Heart left ventricle (tissue), 16 donors: ENCODE measurements at regions of chr9 and their contacts with region 1.

Region 1: DNA sequence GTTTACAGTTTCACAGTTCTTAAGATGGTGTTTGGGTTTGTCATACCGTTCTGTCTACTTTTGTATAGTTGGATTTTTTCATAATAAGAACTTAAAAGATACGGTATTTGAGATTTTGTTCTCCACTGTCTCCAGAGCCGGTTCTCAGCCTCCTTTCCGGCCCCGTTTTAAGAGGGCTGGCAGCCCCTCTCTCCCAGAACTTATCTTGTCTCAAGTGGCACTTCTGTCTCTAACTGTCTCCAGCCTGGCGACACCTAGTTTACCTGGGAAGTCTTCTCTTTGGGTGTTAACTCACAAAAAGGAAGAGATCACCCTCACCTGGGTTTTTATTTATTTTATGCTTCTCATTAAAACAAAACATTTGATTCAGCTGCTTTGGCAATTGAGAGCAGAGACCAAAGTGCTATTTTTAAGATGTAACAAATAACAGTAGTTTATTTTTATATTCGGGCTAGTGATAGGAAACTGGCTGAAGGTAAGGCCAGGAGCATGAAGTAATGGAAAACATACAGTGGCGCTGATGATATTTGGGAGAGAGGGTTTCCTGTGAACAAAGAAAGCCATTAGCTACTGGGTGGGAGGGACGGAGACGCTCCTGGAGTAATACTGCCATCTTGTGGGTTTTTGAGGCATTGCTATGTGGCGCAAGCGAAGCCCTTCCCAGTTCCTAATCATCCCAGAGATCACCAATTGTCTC is 48.3 kb downstream of the ACER2 start:
- DNase-seq: peak in 4 of 5 donors; percentile 52 to 74 (median 62)
- ATAC-seq: peak; percentile 95 to 97 (median 96)
- H3K4me3 ChIP-seq: peak overlapping the region in 9 of 12 donors; percentile 8 to 42 (median 38)
- H3K27ac ChIP-seq: peak overlapping the region; percentile 24 to 82 (median 68)
- H3K4me1 ChIP-seq: peaks cover 0 to 18% (median 10%) of the 10 kb centered on the region in 12 donors
- H3K27me3 ChIP-seq: no peaks in the 10 kb centered on the region
- CTCF ChIP-seq: peak in 11 of 12 donors; percentile 93 to 99 (median 97)
- POLR2A ChIP-seq: no peak

Region 2: GRCh38 chr9:17531642-17532254 is 1925.4 kb before region 1 on chr9:
- intact Hi-C with region 1: loop called in 1 of 10 experiments (anchors 5 kb)
- DNase-seq: no peak
- ATAC-seq: no peak
- H3K4me3 ChIP-seq: no peak overlapping the region
- H3K27ac ChIP-seq: no peak overlapping the region
- H3K4me1 ChIP-seq: peaks cover 0 to 3% (median 0%) of the 10 kb centered on the region in 12 donors
- H3K27me3 ChIP-seq: no peaks in the 10 kb centered on the region
- CTCF ChIP-seq: peak; percentile 37 to 73 (median 58)
- POLR2A ChIP-seq: no peak

Region 3: DNA sequence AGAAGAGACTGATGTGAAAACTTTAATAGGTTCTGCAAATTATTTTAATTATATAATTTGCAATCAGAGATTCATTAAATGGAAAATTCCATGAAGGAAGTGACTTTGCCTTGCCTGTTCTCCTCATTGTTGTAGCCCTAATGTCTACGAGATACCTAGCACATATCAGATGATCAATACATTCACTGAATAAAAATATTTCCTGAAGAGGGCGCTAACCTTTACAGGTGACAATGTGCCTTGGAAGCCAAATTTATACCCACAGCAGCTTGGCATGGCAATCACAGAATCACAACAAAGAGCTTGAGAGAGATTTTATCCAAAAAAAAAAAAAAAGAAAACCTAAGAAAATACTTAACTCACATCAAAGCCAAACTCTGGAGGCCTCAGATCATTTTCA is 371.8 kb before region 1 on chr9:
- intact Hi-C with region 1: loop called in 2 of 10 experiments (anchors 10 kb)
- DNase-seq: no peak
- ATAC-seq: no peak
- H3K4me3 ChIP-seq: no peak overlapping the region
- H3K27ac ChIP-seq: no peak overlapping the region
- H3K4me1 ChIP-seq: no peaks in the 10 kb centered on the region
- H3K27me3 ChIP-seq: no peaks in the 10 kb centered on the region
- CTCF ChIP-seq: peak in 9 of 12 donors; percentile 7 to 40 (median 29)
- POLR2A ChIP-seq: no peak

Region 4: DNA sequence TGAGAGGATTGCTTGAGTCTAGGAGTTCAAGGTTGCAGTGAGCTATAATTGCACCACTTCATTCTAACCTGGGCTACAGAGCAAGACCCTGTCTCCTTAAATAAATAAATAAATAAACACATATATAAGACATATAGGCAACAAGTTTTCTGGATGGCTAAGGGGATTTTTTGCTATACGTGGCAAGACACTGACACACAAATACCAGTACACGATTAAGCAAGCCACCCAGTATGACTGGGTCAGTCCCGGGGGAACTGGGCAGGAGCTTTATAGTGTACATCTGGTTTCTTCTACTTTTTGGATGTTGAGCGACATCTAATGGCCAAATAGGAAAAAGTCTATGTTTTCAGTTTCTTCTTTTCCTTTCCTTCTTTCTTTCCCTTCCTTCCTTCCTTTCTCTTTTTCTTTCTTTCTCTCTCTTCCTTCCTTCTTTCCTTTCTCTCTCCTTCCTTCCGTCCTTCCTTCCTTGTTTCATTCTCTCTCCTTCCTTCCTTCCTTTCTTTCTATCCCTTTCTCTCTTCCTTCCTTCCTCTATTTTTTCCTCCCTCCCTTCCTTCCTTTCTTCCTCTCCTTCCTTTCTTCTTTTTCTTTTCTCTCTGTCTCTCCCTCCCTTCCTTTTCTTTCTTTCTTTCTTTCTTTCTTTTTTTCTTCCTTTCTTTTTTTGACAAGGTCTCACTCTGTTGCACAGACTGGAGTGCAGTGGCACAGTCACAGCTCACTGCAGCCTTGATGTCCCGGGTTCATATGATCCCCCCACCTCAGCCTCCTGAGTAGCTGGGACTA is 282.8 kb before region 1 on chr9:
- intact Hi-C with region 1: loop called in 3 of 10 experiments (anchors 5 to 10 kb)
- DNase-seq: peak; percentile 34 to 84 (median 79)
- ATAC-seq: peak; percentile 82 to 96 (median 88)
- H3K4me3 ChIP-seq: no peak overlapping the region
- H3K27ac ChIP-seq: peak overlapping the region in 1 of 12 donors; percentile 13
- H3K4me1 ChIP-seq: peaks cover 0 to 28% (median 0%) of the 10 kb centered on the region in 12 donors
- H3K27me3 ChIP-seq: no peaks in the 10 kb centered on the region
- CTCF ChIP-seq: peak; percentile 35 to 77 (median 67)
- POLR2A ChIP-seq: no peak

Region 5: DNA sequence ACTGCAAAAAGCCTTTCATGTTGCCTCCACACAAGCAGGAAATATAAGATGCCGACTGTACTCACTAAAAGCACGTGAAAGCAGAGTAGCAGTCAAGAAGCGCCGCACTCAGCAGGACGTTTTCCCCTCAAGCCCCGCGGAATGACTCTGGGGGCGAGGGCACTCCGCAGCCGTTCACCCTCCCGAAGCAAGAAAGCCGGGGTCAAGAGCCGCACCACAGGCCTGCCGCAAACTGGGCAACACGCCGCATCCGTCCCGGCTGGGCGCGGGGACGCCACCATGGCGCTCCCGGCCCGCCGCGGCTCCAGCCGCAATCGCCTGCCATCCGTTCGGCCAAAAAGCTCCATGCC is 77.5 kb before region 1 on chr9:
- intact Hi-C with region 1: loop called in 9 of 10 experiments (anchors 1 to 10 kb)
- DNase-seq: no peak
- ATAC-seq: peak; percentile 29 to 64 (median 62)
- H3K4me3 ChIP-seq: peak overlapping the region; percentile 44 to 86 (median 75)
- H3K27ac ChIP-seq: peak overlapping the region; percentile 64 to 97 (median 91)
- H3K4me1 ChIP-seq: peaks cover 0 to 38% (median 18%) of the 10 kb centered on the region in 12 donors
- H3K27me3 ChIP-seq: no peaks in the 10 kb centered on the region
- CTCF ChIP-seq: peak in 1 of 12 donors; percentile 6
- POLR2A ChIP-seq: no peak

Region 6: DNA sequence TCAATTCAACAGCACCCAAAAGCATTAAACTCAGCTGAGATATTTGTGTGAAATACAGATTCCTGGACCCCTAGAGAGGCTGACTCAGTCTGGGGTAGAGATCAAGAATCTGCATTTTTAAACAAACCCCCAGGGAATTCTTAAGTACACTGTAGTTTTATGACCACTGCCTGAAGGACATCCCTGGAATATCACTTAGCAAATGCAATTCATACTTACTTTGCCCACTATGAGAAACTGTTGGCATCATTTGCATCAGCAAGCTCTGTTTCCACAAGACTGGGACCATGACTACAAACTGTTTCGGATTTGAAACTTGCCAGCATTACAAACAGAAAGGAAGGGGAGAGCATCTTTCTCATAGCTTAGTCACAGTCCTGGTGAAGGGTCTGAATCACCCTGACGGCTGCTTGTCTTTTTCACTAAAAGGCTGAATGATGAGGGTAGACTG is 1101.4 kb after region 1 on chr9:
- intact Hi-C with region 1: no loop called
- DNase-seq: no peak
- ATAC-seq: peak in 1 of 4 donors; percentile 49
- H3K4me3 ChIP-seq: no peak overlapping the region
- H3K27ac ChIP-seq: no peak overlapping the region
- H3K4me1 ChIP-seq: peaks cover 0 to 50% (median 25%) of the 10 kb centered on the region in 12 donors
- H3K27me3 ChIP-seq: no peaks in the 10 kb centered on the region
- CTCF ChIP-seq: no peak
- POLR2A ChIP-seq: no peak